Sigmoid colon (tissue), 7 donors: ENCODE measurements at regions of chr9 and their contacts with region 1.

Region 1: GRCh38 chr9:131762356-131762932 is 22.6 kb upstream of the RAPGEF1 start:
- DNase-seq: peak; percentile 82
- H3K4me3 ChIP-seq: no peak overlapping the region
- H3K27ac ChIP-seq: no peak overlapping the region
- H3K4me1 ChIP-seq: peaks cover 0 to 9% (median 7%) of the 10 kb centered on the region in 4 donors
- H3K27me3 ChIP-seq: peaks cover 0 to 24% (median 0%) of the 10 kb centered on the region in 3 donors
- CTCF ChIP-seq: peak; percentile 85 to 97 (median 90)
- EP300 ChIP-seq: no peak
- POLR2A ChIP-seq: no peak

Region 2: GRCh38 chr9:131447148-131447547 is 315.3 kb before region 1 on chr9:
- intact Hi-C with region 1: no loop called
- DNase-seq: no peak
- H3K4me3 ChIP-seq: no peak overlapping the region
- H3K27ac ChIP-seq: no peak overlapping the region
- H3K4me1 ChIP-seq: no peaks in the 10 kb centered on the region
- H3K27me3 ChIP-seq: no peaks in the 10 kb centered on the region
- CTCF ChIP-seq: no peak
- EP300 ChIP-seq: no peak
- POLR2A ChIP-seq: no peak

Region 3: GRCh38 chr9:131517761-131518190 is 244.7 kb before region 1 on chr9:
- intact Hi-C with region 1: no loop called
- DNase-seq: peak; percentile 84
- H3K4me3 ChIP-seq: no peak overlapping the region
- H3K27ac ChIP-seq: peak overlapping the region in 3 of 4 donors; percentile 61 to 78 (median 75)
- H3K4me1 ChIP-seq: peaks cover 0 to 28% (median 22%) of the 10 kb centered on the region in 4 donors
- H3K27me3 ChIP-seq: no peaks in the 10 kb centered on the region
- CTCF ChIP-seq: no peak
- EP300 ChIP-seq: peak in 2 of 4 donors; percentile 60 to 64
- POLR2A ChIP-seq: no peak

Region 4: DNA sequence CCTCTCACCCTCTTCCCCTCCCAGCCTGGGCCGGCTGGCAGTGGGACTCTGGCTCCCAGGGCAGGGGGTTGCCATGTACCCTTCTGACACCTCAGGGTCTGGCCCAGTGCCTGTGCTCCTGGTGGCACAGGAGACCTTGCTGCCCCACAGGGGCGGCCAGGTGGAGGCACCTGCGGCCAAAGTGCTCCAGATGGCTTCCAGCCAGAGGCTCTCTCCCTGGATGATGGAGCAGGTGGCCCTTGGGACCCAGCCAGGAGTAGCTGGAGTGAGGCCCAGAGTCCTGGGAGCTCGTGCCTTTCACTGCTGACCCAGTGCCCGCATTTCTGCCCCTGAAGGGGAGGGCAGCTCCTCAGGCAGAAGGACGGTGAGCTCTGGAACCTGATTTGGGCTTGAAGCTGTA is 486.7 kb after region 1 on chr9:
- intact Hi-C with region 1: loop called (anchors 2 kb)
- DNase-seq: peak; percentile 44
- H3K4me3 ChIP-seq: no peak overlapping the region
- H3K27ac ChIP-seq: no peak overlapping the region
- H3K4me1 ChIP-seq: peaks cover 0 to 11% (median 6%) of the 10 kb centered on the region in 4 donors
- H3K27me3 ChIP-seq: peaks cover 0 to 18% (median 0%) of the 10 kb centered on the region in 3 donors
- CTCF ChIP-seq: no peak
- EP300 ChIP-seq: no peak
- POLR2A ChIP-seq: no peak

Region 5: GRCh38 chr9:132268725-132269352 is 506.4 kb after region 1 on chr9:
- intact Hi-C with region 1: loop called (anchors 2 kb)
- DNase-seq: peak; percentile 78
- H3K4me3 ChIP-seq: no peak overlapping the region
- H3K27ac ChIP-seq: no peak overlapping the region
- H3K4me1 ChIP-seq: no peaks in the 10 kb centered on the region
- H3K27me3 ChIP-seq: no peaks in the 10 kb centered on the region
- CTCF ChIP-seq: peak; percentile 51 to 89 (median 73)
- EP300 ChIP-seq: no peak
- POLR2A ChIP-seq: no peak